ENCODE measurements at regions of chr1 and their contacts with region 1.

Region 1: GRCh38 chr1:65958561-65959350 is 166.1 kb downstream of the PDE4B start:
- DNase-seq: peak in 4 of 9 experiments; percentile 15 to 70 (median 42)
- ATAC-seq: peak; percentile 57
- H3K4me3 ChIP-seq: no peak overlapping the region
- H3K4me3 Mint-ChIP-seq: no peak overlapping the region
- H3K27ac ChIP-seq: no peak overlapping the region
- H3K27ac Mint-ChIP-seq: no peak overlapping the region
- H3K4me1 ChIP-seq: no peaks in the 10 kb centered on the region
- H3K4me1 Mint-ChIP-seq: no peaks in the 10 kb centered on the region
- H3K27me3 ChIP-seq: no peaks in the 10 kb centered on the region
- H3K27me3 Mint-ChIP-seq: peaks cover 3% of the 10 kb centered on the region
- CTCF ChIP-seq: peak; percentile 91

Region 2: GRCh38 chr1:66331657-66332547 is 373.1 kb after region 1 on chr1:
- CTCF ChIA-PET with region 1: no interaction called
- POLR2A ChIA-PET with region 1: no interaction called
- intact Hi-C with region 1: no loop called
- DNase-seq: peak in 8 of 9 experiments; percentile 18 to 74 (median 54)
- ATAC-seq: peak; percentile 12
- H3K4me3 ChIP-seq: peak overlapping the region; percentile 73 to 79
- H3K4me3 Mint-ChIP-seq: peak overlapping the region; percentile 99
- H3K27ac ChIP-seq: peak overlapping the region; percentile 86
- H3K27ac Mint-ChIP-seq: peak overlapping the region; percentile 98
- H3K4me1 ChIP-seq: peaks cover 42% of the 10 kb centered on the region
- H3K4me1 Mint-ChIP-seq: peaks cover 70% of the 10 kb centered on the region
- H3K27me3 ChIP-seq: no peaks in the 10 kb centered on the region
- H3K27me3 Mint-ChIP-seq: no peaks in the 10 kb centered on the region
- CTCF ChIP-seq: no peak

Region 3: GRCh38 chr1:66503841-66504470 is 545.2 kb after region 1 on chr1:
- CTCF ChIA-PET with region 1: no interaction called
- POLR2A ChIA-PET with region 1: no interaction called
- intact Hi-C with region 1: loop called in 1 of 2 experiments (anchors 2 kb)
- DNase-seq: peak in 3 of 9 experiments; percentile 14 to 48 (median 30)
- ATAC-seq: no peak
- H3K4me3 ChIP-seq: no peak overlapping the region
- H3K4me3 Mint-ChIP-seq: no peak overlapping the region
- H3K27ac ChIP-seq: no peak overlapping the region
- H3K27ac Mint-ChIP-seq: no peak overlapping the region
- H3K4me1 ChIP-seq: no peaks in the 10 kb centered on the region
- H3K4me1 Mint-ChIP-seq: no peaks in the 10 kb centered on the region
- H3K27me3 ChIP-seq: no peaks in the 10 kb centered on the region
- H3K27me3 Mint-ChIP-seq: peaks cover 10% of the 10 kb centered on the region
- CTCF ChIP-seq: peak; percentile 54

Region 4: DNA sequence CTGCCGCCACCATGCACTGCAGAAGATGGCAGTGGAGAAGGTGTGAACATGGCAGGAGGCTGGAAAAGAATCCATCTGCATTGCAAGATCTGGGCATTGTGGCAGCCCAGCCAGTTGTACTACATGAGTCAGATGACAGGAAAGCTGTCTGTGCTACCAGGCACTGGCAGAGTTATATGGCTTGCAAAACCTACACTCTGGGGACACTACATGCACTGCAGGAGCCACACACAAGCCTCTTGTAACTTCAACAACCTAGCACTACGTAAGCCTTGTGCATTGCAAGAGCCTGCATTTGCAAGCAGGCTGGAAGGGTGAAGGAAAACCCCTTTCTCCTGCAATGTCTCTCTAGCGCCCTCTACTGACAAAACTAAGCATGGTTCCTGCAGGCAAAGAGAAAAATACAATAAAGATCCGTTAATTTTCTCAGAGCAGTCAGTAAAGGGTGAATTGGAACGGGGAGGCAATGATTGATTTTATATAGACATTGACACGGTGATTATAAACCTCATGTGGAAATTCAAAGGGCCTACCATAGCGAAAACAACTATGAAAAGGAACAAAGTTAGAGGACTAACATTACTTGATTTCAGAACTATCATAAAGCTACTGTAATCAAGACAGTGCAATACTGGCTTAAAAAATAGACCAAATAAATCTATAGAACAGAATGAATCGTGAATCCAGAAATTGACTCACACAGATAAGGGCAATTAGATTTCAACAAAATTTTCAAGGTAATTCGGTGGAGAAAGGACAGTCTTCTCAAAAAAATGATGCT is 767.3 kb after region 1 on chr1:
- CTCF ChIA-PET with region 1: interaction called, 3 read pairs
- POLR2A ChIA-PET with region 1: no interaction called
- intact Hi-C with region 1: loop called (anchors 2 to 5 kb)
- DNase-seq: peak; percentile 4 to 78 (median 42)
- ATAC-seq: peak; percentile 66
- H3K4me3 ChIP-seq: no peak overlapping the region
- H3K4me3 Mint-ChIP-seq: no peak overlapping the region
- H3K27ac ChIP-seq: no peak overlapping the region
- H3K27ac Mint-ChIP-seq: no peak overlapping the region
- H3K4me1 ChIP-seq: no peaks in the 10 kb centered on the region
- H3K4me1 Mint-ChIP-seq: peaks cover 17% of the 10 kb centered on the region
- H3K27me3 ChIP-seq: no peaks in the 10 kb centered on the region
- H3K27me3 Mint-ChIP-seq: peaks cover 20% of the 10 kb centered on the region
- CTCF ChIP-seq: peak; percentile 94